ENCODE measurements at regions of chr1 and their contacts with region 1.

Region 1: DNA sequence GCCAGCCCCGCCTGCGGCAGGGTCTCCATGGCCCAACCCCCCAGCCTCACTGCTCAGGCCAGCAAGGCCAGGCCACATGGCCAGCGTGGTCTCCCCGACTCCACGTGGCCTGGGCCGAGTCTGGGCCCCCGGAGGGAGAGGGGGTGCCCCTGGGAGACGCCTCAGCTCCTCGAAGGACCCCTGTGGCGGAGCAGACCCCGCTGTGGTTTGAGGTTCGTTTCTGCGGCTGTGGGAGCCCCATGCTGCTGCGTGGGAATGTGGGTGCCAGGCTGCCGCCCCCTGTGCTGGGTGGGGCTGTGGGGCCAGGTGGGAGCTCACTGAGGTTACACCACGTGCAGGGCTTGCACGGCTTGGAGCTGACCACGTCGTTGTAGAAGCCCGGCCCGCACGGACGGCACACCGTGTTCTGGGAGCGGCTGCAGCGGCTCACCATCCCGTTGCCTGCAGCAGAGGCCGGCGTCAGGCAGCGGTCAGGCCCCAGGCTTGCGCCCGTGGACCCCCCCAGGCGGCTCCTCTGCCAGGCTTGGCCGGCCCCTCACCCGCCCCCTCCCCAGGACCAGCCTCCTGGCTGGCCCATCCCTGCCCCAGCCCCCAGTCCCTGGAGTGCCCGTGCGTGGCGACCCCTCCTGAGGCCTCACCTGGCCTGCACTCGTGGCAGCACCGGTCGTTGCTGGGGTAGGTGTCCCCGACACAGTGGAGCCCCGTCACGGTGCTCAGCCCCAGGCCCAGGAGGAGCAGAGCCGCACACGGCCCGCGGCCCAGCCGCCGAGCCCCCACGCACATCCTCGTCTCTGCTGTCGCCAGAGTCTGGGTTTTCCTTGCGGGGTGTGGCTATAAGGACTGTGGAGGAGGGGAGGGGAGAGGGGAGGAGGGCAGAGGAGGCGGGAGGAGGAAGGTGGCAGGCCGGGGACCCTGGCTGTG is at the start of gene TNFRSF4:
- DNase-seq: no peak
- H3K4me3 Mint-ChIP-seq: peak within 1 kb of the TSS; percentile 86
- H3K27ac Mint-ChIP-seq: peak within 1 kb of the TSS; percentile 87
- H3K4me1 Mint-ChIP-seq: peaks cover 48% of the 10 kb centered on the region
- H3K27me3 Mint-ChIP-seq: no peaks in the 10 kb centered on the region
- total RNA-seq, gene TNFRSF4: 788 and 811 TPM in 2 replicates

Region 2: GRCh38 chr1:1200851-1201810 is 12.5 kb before region 1 on chr1:
- intact Hi-C with region 1: loop called (anchors 2 kb)
- DNase-seq: peak; percentile 88
- H3K4me3 Mint-ChIP-seq: peak overlapping the region; percentile 68
- H3K27ac Mint-ChIP-seq: peak overlapping the region; percentile 89
- H3K4me1 Mint-ChIP-seq: peaks cover 6% of the 10 kb centered on the region
- H3K27me3 Mint-ChIP-seq: no peaks in the 10 kb centered on the region

Region 3: DNA sequence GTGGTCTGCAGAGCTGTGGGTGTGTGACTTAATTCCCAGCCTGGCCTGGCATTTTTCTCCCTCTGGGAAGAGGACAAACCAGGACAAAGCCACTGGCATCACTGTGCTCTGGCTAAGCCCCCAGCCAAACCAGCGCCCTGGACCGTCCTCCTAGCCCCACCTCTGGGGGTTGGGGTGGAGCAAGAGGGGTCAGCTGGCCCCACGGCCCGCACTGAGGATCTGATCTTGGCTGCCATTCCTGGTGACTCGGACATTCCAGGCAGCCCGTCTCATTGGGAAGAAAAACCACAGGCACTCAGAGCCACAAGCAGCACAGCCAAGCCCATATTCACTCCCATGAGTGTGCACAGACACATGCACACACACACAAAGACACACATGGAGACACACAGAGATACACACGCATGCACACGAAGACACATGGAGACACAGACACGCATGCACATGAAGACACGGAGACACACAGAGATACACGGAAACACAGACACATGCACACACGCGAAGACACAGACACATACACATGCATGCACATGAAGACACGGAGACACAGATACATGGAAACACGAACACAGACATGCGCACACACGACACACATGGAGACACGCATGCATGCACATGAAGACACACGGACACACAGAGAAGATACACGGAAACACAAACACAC is 147.0 kb after region 1 on chr1:
- intact Hi-C with region 1: no loop called
- DNase-seq: no peak
- H3K4me3 Mint-ChIP-seq: no peak overlapping the region
- H3K27ac Mint-ChIP-seq: no peak overlapping the region
- H3K4me1 Mint-ChIP-seq: peaks cover 6% of the 10 kb centered on the region
- H3K27me3 Mint-ChIP-seq: peaks cover 16% of the 10 kb centered on the region

Measured in activated T-helper 1 cell treated with anti-CD3 and anti-CD28 coated beads, Interleukin-12 subunit alpha, Interleukin-12 subunit beta, Interleukin-2, Interleukin-4 antibody, amounts not matched to agents 30 ng/mL and 10 ng/mL and 1 ng/mL, durations not matched to agents 14 hours and 24 hours and 36 hours (primary cell).